Activated CD4-positive, alpha-beta memory T cell treated with anti-CD3 and anti-CD28 coated beads for 36 hours (primary cell): ENCODE measurements at regions of chr5 and their contacts with region 1.

Region 1: GRCh38 chr5:32542216-32543059 is 42.9 kb upstream of the SUB1 start:
- DNase-seq: peak; percentile 65
- H3K4me3 Mint-ChIP-seq: peak overlapping the region; percentile 36
- H3K27ac Mint-ChIP-seq: peak overlapping the region; percentile 94
- H3K4me1 Mint-ChIP-seq: peaks cover 57% of the 10 kb centered on the region
- H3K27me3 Mint-ChIP-seq: no peaks in the 10 kb centered on the region

Region 2: DNA sequence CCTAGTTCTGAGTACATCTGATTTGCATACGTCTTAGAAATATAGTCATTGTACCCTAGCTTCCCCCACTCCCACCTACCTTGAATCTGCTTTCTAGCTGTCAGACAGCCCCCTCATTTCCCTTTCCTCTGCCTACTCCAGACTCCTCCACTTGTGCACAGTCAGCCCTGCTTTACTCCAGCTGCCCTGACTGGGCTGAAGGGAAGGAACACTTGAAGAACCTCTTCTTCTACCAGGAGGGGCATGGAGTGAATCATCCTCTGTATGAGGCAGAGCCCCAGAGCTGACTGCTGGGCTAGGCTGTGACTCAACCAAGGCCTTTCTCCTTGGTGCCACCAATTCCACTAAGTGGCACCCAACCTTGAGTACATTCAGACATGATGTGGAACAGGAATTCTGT is 79.8 kb before region 1 on chr5:
- CTCF ChIA-PET with region 1: no interaction called
- POLR2A ChIA-PET with region 1: no interaction called
- intact Hi-C with region 1: loop called (anchors 1 kb)
- DNase-seq: peak; percentile 80
- H3K4me3 Mint-ChIP-seq: no peak overlapping the region
- H3K27ac Mint-ChIP-seq: peak overlapping the region; percentile 73
- H3K4me1 Mint-ChIP-seq: peaks cover 17% of the 10 kb centered on the region
- H3K27me3 Mint-ChIP-seq: no peaks in the 10 kb centered on the region

Region 3: GRCh38 chr5:32522429-32523143 is 19.9 kb before region 1 on chr5:
- CTCF ChIA-PET with region 1: no interaction called
- POLR2A ChIA-PET with region 1: no interaction called
- intact Hi-C with region 1: loop called (anchors 2 kb)
- DNase-seq: peak; percentile 73
- H3K4me3 Mint-ChIP-seq: no peak overlapping the region
- H3K27ac Mint-ChIP-seq: no peak overlapping the region
- H3K4me1 Mint-ChIP-seq: peaks cover 15% of the 10 kb centered on the region
- H3K27me3 Mint-ChIP-seq: no peaks in the 10 kb centered on the region

Region 4: DNA sequence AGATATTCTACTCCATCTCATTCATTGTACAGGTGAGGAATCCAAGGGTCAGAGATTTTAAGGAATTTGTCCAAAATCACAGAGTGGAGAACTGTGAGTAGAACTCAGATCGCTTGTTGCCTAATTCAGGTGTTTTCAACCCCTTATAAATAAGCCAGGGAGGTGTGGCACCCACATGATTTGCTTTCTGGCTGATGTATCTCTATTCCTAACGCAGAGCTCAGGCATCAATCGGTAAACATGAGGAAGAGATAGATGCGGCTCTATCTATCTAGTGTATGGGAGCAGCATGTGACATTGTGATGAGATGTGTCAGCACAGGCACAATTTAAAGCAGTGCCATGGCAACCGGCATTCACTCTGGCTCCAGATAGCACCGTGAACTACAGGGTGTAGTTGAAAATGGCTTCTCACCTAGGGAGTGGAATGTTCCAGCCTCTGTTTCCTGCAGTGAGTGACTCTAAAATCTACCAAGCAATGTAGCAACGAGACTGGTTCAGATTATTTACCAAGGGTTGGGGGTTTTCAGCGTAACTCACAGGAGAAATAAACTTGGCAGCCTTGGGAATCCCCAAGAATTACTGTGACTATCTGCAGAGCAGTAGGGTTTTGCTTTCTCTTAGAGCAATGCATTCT is 10.4 kb before region 1 on chr5:
- CTCF ChIA-PET with region 1: interaction called, 7 read pairs
- POLR2A ChIA-PET with region 1: interaction called, 13 read pairs
- intact Hi-C with region 1: loop called (anchors 1 kb)
- DNase-seq: peak; percentile 81
- H3K4me3 Mint-ChIP-seq: peak overlapping the region; percentile 91
- H3K27ac Mint-ChIP-seq: peak overlapping the region; percentile 99
- H3K4me1 Mint-ChIP-seq: peaks cover 56% of the 10 kb centered on the region
- H3K27me3 Mint-ChIP-seq: no peaks in the 10 kb centered on the region

Region 5: DNA sequence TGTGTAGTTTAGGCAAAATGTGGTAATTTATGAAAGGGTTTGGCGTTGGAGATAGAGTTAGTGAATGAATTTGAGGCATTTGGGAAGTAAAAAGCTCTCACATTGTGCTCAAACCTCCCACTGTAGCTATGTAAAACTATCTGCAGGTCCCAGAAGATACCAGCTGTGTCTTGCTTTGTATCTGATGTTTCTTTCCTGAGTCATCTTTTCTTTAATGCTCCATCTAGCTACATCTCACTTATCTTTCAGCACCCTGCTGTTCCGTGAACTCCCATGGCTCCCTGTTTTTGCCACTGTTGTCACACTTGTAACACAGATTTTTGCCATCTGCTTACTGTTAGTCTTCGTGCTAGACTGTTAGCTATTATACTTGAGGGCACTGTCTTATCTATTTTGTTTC is 421.8 kb after region 1 on chr5:
- CTCF ChIA-PET with region 1: no interaction called
- POLR2A ChIA-PET with region 1: no interaction called
- intact Hi-C with region 1: no loop called
- DNase-seq: no peak
- H3K4me3 Mint-ChIP-seq: no peak overlapping the region
- H3K27ac Mint-ChIP-seq: no peak overlapping the region
- H3K4me1 Mint-ChIP-seq: no peaks in the 10 kb centered on the region
- H3K27me3 Mint-ChIP-seq: no peaks in the 10 kb centered on the region